GM12878 (cell line): ENCODE measurements at regions of chr7 and their contacts with region 1.

Region 1: DNA sequence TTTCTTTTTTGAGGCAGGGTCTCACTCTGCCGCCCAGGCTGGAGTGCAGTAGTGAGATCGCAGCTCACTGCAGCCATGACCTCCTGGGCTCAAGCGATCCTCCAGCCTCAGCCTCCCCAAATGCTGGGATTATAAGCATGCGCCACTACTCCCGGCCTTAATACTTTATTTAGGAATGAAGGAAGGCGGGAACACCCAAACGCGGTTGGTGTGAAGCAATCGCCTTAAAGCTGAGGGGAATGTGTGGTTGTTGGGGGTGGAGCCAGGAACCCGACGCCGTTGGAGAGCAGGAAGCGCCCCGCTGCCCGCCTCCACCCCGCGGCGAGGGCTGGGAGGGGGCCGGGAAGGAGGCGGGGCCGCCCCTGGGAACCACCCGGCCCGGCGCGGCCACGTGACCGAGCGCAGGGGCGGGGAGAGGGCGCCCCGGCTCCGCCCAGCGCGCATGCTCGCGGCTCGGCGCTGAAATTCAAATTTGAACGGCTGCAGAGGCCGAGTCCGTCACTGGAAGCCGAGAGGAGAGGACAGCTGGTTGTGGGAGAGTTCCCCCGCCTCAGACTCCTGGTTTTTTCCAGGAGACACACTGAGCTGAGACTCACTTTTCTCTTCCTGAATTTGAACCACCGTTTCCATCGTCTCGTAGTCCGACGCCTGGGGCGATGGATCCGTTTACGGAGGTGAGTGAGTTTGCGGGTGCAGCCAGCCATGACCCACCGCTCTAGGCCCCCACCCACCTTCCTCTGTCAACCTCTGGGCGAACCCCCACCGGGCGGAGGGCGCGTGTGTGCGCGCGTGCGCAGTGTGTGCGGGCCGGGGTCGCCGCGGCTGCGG is at the start of gene ANLN:
- DNase-seq: peak; percentile 28
- ATAC-seq: peak; percentile 90
- H3K4me3 ChIP-seq: peak within 1 kb of the TSS; percentile 93
- H3K27ac ChIP-seq: peak within 1 kb of the TSS; percentile 62
- H3K4me1 ChIP-seq: no peaks in the 10 kb centered on the region
- H3K27me3 ChIP-seq: no peaks in the 10 kb centered on the region
- CTCF ChIP-seq: no peak
- EP300 ChIP-seq: no peak
- POLR2A ChIP-seq: peak; percentile 77
- RAD21 ChIP-seq: no peak
- polyA plus RNA-seq, gene ANLN: 9.5 to 10.6 TPM

Region 2: GRCh38 chr7:36366718-36367560 is 22.6 kb before region 1 on chr7:
- CTCF ChIA-PET with region 1: interaction called, 24 read pairs
- POLR2A ChIA-PET with region 1: interaction called, 4 read pairs
- RAD21 ChIA-PET with region 1: interaction called, 4 read pairs
- SMC1A ChIA-PET with region 1: interaction called, 4 read pairs
- in situ Hi-C with region 1: no loop called
- intact Hi-C with region 1: loop called (anchors 2 kb)
- DNase-seq: peak; percentile 50
- ATAC-seq: peak; percentile 99
- H3K4me3 ChIP-seq: peak overlapping the region; percentile 76
- H3K27ac ChIP-seq: no peak overlapping the region
- H3K4me1 ChIP-seq: no peaks in the 10 kb centered on the region
- H3K27me3 ChIP-seq: no peaks in the 10 kb centered on the region; a peak in 3 of 4 replicates
- CTCF ChIP-seq: peak; percentile 86 to 95 (median 94)
- EP300 ChIP-seq: no peak
- POLR2A ChIP-seq: no peak
- RAD21 ChIP-seq: peak; percentile 61

Region 3: DNA sequence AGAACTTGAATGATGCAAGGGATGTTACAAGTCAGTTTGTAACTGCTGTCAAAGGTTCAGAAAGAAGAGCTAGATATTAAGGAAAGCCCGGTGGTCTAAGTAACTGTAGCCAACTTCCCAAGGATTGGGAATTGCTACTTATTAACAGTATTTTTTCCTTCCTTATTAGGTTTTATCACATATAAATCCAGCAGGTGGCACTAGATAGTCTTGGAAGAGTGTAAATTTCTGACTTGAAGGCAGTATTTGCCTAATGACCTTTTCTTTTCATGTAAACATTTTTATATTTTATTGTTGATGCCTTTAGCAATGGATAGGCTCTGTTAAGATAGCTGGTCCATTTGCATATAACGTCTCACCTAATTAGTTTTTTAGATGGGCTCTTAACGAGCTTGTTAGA is 51.3 kb after region 1 on chr7:
- CTCF ChIA-PET with region 1: interaction called, 12 read pairs
- POLR2A ChIA-PET with region 1: no interaction called
- RAD21 ChIA-PET with region 1: no interaction called
- SMC1A ChIA-PET with region 1: interaction called, 4 read pairs
- in situ Hi-C with region 1: no loop called
- intact Hi-C with region 1: no loop called
- DNase-seq: no peak
- ATAC-seq: no peak
- H3K4me3 ChIP-seq: no peak overlapping the region
- H3K27ac ChIP-seq: no peak overlapping the region
- H3K4me1 ChIP-seq: no peaks in the 10 kb centered on the region
- H3K27me3 ChIP-seq: no peaks in the 10 kb centered on the region
- CTCF ChIP-seq: peak; percentile 15 to 32 (median 23); a peak in 3 of 6 replicates
- EP300 ChIP-seq: no peak
- POLR2A ChIP-seq: no peak
- RAD21 ChIP-seq: peak; percentile 30; the same call in 1 of the 2 replicates